Psoas muscle (tissue), 8 donors: ENCODE measurements at regions of chr15 and their contacts with region 1.

Region 1: GRCh38 chr15:62389885-62390790 is 225.1 kb upstream of the C2CD4B start:
- DNase-seq: peak; percentile 79 to 86
- ATAC-seq: peak; percentile 82 to 85 (median 83)
- H3K4me3 ChIP-seq: peak within 1 kb of the TSS; percentile 85
- H3K27ac ChIP-seq: peak within 1 kb of the TSS; percentile 94
- H3K4me1 ChIP-seq: peaks cover 23% of the 10 kb centered on the region
- H3K27me3 ChIP-seq: no peaks in the 10 kb centered on the region
- CTCF ChIP-seq: no peak

Region 2: GRCh38 chr15:61921093-61921492 is 469.0 kb before region 1 on chr15:
- intact Hi-C with region 1: no loop called
- DNase-seq: no peak
- ATAC-seq: no peak
- H3K4me3 ChIP-seq: no peak overlapping the region
- H3K27ac ChIP-seq: no peak overlapping the region
- H3K4me1 ChIP-seq: peaks cover 9% of the 10 kb centered on the region
- H3K27me3 ChIP-seq: no peaks in the 10 kb centered on the region
- CTCF ChIP-seq: no peak

Region 3: GRCh38 chr15:62432702-62433398 is 42.7 kb after region 1 on chr15:
- intact Hi-C with region 1: loop called in 1 of 2 experiments (anchors 5 kb)
- DNase-seq: peak; percentile 52 to 86
- ATAC-seq: peak; percentile 96 to 97 (median 96)
- H3K4me3 ChIP-seq: no peak overlapping the region
- H3K27ac ChIP-seq: peak overlapping the region; percentile 87
- H3K4me1 ChIP-seq: peaks cover 40% of the 10 kb centered on the region
- H3K27me3 ChIP-seq: no peaks in the 10 kb centered on the region
- CTCF ChIP-seq: no peak

Region 4: DNA sequence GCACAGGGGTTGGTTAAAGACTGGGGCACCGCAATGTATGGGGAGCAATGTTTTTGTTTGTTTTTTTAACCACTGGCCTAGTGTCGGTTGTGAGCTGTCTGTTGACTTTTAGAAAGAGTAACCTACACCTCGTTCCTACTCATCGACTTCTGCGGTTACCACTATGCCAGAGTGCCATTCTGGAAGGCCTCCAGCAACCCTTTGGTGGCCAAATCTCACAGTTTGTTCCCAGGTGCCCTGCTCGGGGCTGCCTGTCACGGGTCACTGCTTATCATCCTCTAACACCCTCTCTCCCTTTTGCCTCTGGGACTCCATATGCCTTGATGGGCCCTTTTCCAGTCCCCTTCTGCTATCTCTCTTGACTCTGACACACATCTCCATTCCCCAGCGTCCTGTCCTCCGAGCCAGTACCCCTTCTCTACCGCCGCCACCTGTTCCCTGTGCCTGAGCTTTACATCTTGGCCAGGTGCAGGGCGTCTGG is 65.3 kb after region 1 on chr15:
- intact Hi-C with region 1: loop called in 1 of 2 experiments (anchors 5 kb)
- DNase-seq: peak in 1 of 2 donors; percentile 79
- ATAC-seq: peak; percentile 54 to 71 (median 68)
- H3K4me3 ChIP-seq: peak overlapping the region; percentile 42
- H3K27ac ChIP-seq: peak overlapping the region; percentile 86
- H3K4me1 ChIP-seq: peaks cover 59% of the 10 kb centered on the region
- H3K27me3 ChIP-seq: no peaks in the 10 kb centered on the region
- CTCF ChIP-seq: no peak

Region 5: GRCh38 chr15:62469874-62470688 is 79.9 kb after region 1 on chr15:
- intact Hi-C with region 1: loop called in 1 of 2 experiments (anchors 5 kb)
- DNase-seq: peak; percentile 67 to 78
- ATAC-seq: peak; percentile 54 to 77 (median 62)
- H3K4me3 ChIP-seq: no peak overlapping the region
- H3K27ac ChIP-seq: peak overlapping the region; percentile 82
- H3K4me1 ChIP-seq: peaks cover 51% of the 10 kb centered on the region
- H3K27me3 ChIP-seq: no peaks in the 10 kb centered on the region
- CTCF ChIP-seq: no peak

Region 6: GRCh38 chr15:62549345-62549970 is 159.3 kb after region 1 on chr15:
- intact Hi-C with region 1: loop called in 1 of 2 experiments (anchors 5 kb)
- DNase-seq: no peak
- ATAC-seq: no peak
- H3K4me3 ChIP-seq: no peak overlapping the region
- H3K27ac ChIP-seq: no peak overlapping the region
- H3K4me1 ChIP-seq: peaks cover 36% of the 10 kb centered on the region
- H3K27me3 ChIP-seq: no peaks in the 10 kb centered on the region
- CTCF ChIP-seq: peak; percentile 36

Region 7: DNA sequence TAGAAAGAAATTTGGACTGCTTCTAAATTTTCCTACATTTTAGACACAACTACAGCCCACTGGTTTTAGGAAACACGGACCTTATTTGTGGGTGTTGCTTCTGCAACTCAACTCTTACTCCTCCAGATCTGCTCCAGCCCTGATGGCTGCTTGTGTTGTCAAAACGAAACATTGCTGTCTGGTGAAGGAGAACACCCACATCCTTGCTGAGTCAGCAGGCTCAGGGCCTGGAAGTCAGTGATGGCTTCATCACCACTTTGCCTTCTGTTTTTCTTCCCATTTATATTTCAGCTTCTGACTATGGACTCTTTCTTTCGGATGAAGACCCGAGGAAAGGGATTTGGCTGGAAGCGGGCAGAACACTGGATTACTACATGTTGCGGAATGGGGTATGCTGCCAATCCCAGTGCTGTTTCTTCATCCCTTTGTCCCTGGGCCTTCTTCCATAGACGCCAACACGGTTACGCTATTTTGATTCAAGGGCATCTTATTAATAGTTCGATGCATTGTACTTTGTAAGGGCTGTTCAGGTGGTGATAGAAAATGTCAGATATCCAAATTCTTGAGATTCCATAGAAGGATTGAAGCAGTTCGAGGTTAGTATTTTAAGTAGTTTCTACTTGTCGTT is 259.8 kb after region 1 on chr15:
- intact Hi-C with region 1: loop called (anchors 2 to 10 kb)
- DNase-seq: no peak
- ATAC-seq: peak in 3 of 4 donors; percentile 55 to 76 (median 58)
- H3K4me3 ChIP-seq: no peak overlapping the region
- H3K27ac ChIP-seq: peak overlapping the region; percentile 46
- H3K4me1 ChIP-seq: peaks cover 15% of the 10 kb centered on the region
- H3K27me3 ChIP-seq: no peaks in the 10 kb centered on the region
- CTCF ChIP-seq: no peak

Region 8: DNA sequence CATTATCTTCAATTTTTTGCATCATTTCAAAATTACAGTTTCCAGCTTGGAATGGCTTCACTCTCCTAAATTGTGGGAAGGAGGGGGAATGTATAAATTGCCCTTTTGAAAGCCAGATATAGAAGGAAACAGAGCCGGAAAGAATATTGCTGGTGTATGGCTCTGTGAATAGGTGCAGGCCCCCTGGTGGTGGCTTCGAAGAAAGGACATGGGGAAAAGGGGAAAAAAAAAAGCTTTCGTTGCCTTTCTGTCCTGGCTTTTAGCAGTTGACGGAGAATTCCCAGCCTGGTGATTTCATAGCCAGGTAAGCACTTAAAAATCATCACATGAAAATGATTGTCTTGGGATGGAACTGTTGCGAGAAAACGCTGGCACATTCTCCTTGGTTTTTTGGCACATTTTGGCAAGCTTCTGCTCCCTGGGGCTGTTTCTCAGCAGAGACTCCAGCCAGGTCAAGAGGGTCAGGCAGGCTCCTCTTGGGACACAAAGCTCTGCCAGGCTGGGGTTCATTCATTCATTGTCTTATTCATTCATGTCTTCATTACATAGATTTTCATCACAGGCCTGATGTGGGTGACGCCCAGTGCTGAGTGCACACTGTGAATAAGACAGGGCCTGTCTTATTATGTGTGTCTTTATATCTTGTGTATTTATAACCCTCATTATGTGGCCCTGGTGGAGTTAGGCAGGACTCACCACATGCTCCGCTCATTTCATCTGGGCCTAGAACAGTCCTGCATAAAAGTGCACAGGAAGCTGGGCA is 352.5 kb after region 1 on chr15:
- intact Hi-C with region 1: loop called in 1 of 2 experiments (anchors 5 kb)
- DNase-seq: peak; percentile 70 to 83
- ATAC-seq: peak; percentile 61 to 83 (median 66)
- H3K4me3 ChIP-seq: no peak overlapping the region
- H3K27ac ChIP-seq: peak overlapping the region; percentile 24
- H3K4me1 ChIP-seq: peaks cover 10% of the 10 kb centered on the region
- H3K27me3 ChIP-seq: no peaks in the 10 kb centered on the region
- CTCF ChIP-seq: peak; percentile 74